ENCODE measurements at regions of chr6 and their contacts with region 1.

Region 1: GRCh38 chr6:168968228-168968627 is 285.4 kb downstream of the THBS2 start:
- DNase-seq: no peak
- H3K4me3 ChIP-seq: no peak overlapping the region
- H3K27ac ChIP-seq: no peak overlapping the region
- H3K4me1 ChIP-seq: peaks cover 0 to 2% of the 10 kb centered on the region in 2 experiments; a peak in 1 of 4 replicates
- H3K27me3 ChIP-seq: no peaks in the 10 kb centered on the region
- CTCF ChIP-seq: no peak
- EP300 ChIP-seq: no peak
- RAD21 ChIP-seq: no peak

Region 2: GRCh38 chr6:168956884-168957730 is 11.1 kb before region 1 on chr6:
- CTCF ChIA-PET with region 1: interaction called, 15 read pairs
- POLR2A ChIA-PET with region 1: no interaction called
- DNase-seq: peak; percentile 77
- H3K4me3 ChIP-seq: peak overlapping the region in 1 of 2 experiments; percentile 25; a peak in 1 of 4 replicates
- H3K27ac ChIP-seq: no peak overlapping the region
- H3K4me1 ChIP-seq: no peaks in the 10 kb centered on the region
- H3K27me3 ChIP-seq: no peaks in the 10 kb centered on the region
- CTCF ChIP-seq: peak; percentile 91
- EP300 ChIP-seq: no peak
- RAD21 ChIP-seq: peak; percentile 93